ENCODE measurements at regions of chr6 and their contacts with region 1.

Region 1: GRCh38 chr6:75601304-75602245 is at the start of gene SENP6:
- DNase-seq: peak; percentile 91
- H3K4me3 Mint-ChIP-seq: peak within 1 kb of the TSS; percentile 99
- H3K27ac Mint-ChIP-seq: peak within 1 kb of the TSS; percentile 99
- H3K4me1 Mint-ChIP-seq: peaks cover 42% of the 10 kb centered on the region
- H3K27me3 Mint-ChIP-seq: no peaks in the 10 kb centered on the region
- total RNA-seq, gene SENP6: 76.7 and 79.4 TPM in 2 replicates

Region 2: GRCh38 chr6:75243333-75244062 is 358.1 kb before region 1 on chr6 and contains the start of gene COX7A2:
- intact Hi-C with region 1: loop called (anchors 1 kb)
- DNase-seq: peak; percentile 96
- H3K4me3 Mint-ChIP-seq: peak within 1 kb of the TSS; percentile 94
- H3K27ac Mint-ChIP-seq: peak within 1 kb of the TSS; percentile 95
- H3K4me1 Mint-ChIP-seq: peaks cover 24% of the 10 kb centered on the region
- H3K27me3 Mint-ChIP-seq: peaks cover 15% of the 10 kb centered on the region
- total RNA-seq, gene COX7A2: 490 and 538 TPM in 2 replicates

Region 3: GRCh38 chr6:75611702-75612375 is 10.3 kb after region 1 on chr6:
- intact Hi-C with region 1: loop called (anchors 1 kb)
- DNase-seq: peak; percentile 74
- H3K4me3 Mint-ChIP-seq: peak overlapping the region; percentile 48
- H3K27ac Mint-ChIP-seq: peak overlapping the region; percentile 76
- H3K4me1 Mint-ChIP-seq: peaks cover 62% of the 10 kb centered on the region
- H3K27me3 Mint-ChIP-seq: no peaks in the 10 kb centered on the region

Region 4: GRCh38 chr6:75643173-75643572 is 41.6 kb after region 1 on chr6:
- intact Hi-C with region 1: loop called (anchors 5 kb)
- DNase-seq: no peak
- H3K4me3 Mint-ChIP-seq: no peak overlapping the region
- H3K27ac Mint-ChIP-seq: no peak overlapping the region
- H3K4me1 Mint-ChIP-seq: peaks cover 2% of the 10 kb centered on the region
- H3K27me3 Mint-ChIP-seq: no peaks in the 10 kb centered on the region

Region 5: DNA sequence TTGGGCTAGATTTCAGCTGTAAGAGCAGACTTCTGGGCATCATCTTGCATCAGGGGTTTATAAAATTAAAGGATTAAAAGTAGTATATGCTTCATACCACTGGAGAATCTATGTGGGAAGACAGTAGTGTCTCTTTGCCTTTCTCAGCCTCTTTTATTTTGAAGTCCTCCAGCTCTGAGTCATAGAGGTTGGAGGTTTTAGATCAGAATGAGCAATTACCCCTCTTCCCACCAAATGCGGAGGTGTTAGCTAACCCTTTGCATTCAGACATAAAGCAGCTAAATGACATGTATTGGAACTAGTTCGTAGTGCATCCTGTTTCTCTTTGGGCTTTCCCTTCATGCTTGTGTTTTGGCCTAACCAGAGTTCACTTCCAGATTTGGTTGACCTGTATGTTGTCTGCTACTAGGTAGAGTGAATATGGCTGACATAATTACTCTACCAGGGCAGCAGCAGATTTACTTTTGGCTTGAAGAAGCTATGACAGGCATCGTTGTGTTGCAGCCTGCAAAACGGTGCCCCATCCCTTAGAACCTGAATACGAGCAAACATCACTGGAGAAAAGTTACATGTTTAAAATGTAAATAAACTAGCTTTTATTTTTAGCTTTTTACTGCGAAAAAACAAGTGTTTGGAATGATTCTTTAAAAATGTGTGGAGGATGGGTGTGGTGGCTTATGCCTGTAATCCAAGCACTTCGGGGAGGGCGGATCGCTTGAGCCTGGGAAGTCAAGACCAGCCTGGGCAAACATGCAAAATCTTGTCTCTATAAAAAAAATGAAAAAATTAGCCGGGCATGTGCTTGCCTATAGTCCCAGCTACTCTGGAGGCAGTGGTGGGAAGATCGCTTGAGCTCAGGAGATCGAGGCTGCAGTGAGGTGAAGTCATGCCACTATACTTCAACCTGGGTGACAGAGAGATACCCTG is 229.6 kb after region 1 on chr6:
- intact Hi-C with region 1: loop called (anchors 5 kb)
- DNase-seq: peak; percentile 59
- H3K4me3 Mint-ChIP-seq: no peak overlapping the region
- H3K27ac Mint-ChIP-seq: no peak overlapping the region
- H3K4me1 Mint-ChIP-seq: peaks cover 4% of the 10 kb centered on the region
- H3K27me3 Mint-ChIP-seq: peaks cover 3% of the 10 kb centered on the region

Region 6: GRCh38 chr6:76510481-76510880 is 908.9 kb after region 1 on chr6:
- intact Hi-C with region 1: no loop called
- DNase-seq: no peak
- H3K4me3 Mint-ChIP-seq: no peak overlapping the region
- H3K27ac Mint-ChIP-seq: no peak overlapping the region
- H3K4me1 Mint-ChIP-seq: no peaks in the 10 kb centered on the region
- H3K27me3 Mint-ChIP-seq: no peaks in the 10 kb centered on the region